GM13977 (cell line): ENCODE measurements at regions of chr10 and their contacts with region 1.

Region 1: GRCh38 chr10:70880077-70880534 is 8.3 kb downstream of the PCBD1 start:
- DNase-seq: peak; percentile 77
- CTCF ChIP-seq: peak; percentile 80

Region 2: GRCh38 chr10:70549962-70550458 is 330.1 kb before region 1 on chr10:
- in situ Hi-C with region 1: loop called (anchors 25 kb)
- DNase-seq: peak; percentile 85
- CTCF ChIP-seq: peak; percentile 83

Region 3: DNA sequence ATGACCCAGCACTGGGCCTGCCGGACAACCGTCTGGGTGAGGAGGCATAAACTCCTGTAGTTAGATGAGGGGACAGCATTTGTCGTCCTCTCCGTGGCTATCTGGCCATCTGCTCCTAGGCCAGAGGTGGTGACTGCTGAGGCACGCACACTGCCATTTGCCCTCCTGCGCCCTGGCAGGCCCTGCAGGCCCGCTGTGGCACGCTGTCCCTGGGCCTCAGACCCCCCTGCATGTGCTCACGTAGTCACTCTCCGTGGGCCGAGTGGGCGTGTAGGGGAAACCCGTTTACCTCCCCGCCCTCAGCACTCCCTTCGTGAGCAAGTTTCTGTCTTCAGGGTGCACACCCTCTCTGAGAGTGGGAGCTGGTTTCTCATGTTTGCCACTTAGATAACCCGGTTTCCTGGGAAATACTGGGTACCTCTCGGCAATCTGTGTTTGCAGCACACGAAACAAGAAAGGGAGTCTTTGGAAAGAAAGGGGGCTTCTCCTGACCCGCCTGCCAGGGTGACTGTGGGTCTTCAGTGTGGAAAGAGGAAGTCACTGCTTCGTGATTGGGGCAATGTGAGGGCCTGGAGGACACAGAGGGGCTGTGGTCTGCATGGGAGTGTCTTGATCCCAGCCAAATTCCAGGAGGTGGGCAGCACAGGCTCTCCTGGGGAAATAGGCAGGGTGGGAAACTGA is 197.0 kb before region 1 on chr10:
- in situ Hi-C with region 1: no loop called
- DNase-seq: peak; percentile 54
- CTCF ChIP-seq: no peak

Region 4: DNA sequence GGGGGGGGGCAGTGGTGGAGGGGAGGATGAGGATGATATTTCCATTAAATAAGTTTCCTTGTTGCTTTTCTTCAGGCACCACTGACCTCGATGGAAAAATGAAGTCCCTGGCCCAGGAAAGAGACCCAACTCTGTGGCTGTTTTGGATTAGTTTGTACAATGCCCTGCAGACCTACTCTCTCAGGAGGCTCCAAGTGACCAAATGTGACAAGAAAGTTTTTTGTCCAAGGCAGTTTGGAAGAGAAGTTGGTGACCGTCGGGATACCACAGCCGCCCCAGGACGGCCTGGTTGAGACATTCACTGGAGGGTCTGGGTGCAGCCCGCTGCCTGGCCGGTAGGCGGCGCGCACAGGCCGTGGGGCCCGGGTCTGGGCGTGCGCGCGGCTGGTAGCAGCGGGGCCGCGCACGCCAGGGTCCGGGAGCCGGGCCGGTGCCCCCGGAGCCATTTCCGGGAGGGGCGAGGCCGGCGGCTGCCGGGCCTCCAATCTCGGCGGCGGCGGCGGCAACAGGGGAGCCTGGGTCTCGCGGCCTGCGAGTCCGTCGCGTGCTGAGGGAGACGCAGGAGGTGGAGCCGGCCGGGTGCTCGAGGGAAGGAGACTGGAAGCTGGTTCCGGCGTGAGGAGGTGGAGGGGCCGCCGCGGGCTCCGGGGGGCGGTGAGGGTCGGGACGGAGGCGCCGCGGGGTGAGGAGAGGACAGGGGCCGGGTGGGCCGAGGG is 64.4 kb before region 1 on chr10 and contains the start of gene SGPL1:
- in situ Hi-C with region 1: loop called (anchors 10 kb)
- DNase-seq: peak; percentile 98
- CTCF ChIP-seq: peak; percentile 100

Region 5: DNA sequence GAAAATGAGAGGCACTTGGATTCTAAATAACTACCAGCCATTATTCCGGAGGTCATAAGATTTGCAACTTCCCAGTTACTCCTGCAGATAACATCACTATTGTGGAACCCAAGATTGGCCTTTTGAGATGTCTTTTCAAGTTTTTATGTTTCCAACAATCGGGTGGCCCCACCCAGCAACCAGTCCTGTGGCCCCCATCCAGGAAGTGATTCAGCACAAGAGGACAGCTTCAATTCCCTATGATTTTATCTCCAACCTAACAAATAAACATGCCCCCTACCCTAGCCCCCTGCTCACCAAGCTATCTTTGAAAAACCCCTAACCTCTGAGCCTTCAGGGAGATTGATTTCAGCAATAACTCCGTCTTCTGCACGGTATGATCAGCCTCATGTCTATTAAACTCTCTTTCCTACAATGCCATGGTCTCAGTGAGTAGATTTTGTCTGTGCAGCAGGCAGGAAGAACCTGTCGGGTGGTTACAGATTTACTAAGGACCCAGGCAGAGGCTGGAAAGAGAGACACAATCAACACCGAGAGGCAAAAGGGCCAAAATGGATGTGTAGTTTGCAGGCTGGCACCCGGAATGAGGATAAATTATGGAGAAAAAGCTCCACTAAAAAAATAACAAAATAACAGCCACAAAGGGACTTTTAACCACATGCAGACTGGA is 248.3 kb after region 1 on chr10:
- in situ Hi-C with region 1: no loop called
- DNase-seq: no peak
- CTCF ChIP-seq: no peak